Activated CD8-positive, alpha-beta T cell treated with anti-CD3 and anti-CD28 coated beads, Interleukin-2, amount 10 ng/mL, durations not matched to agents 7 days and 5 days (primary cell): ENCODE measurements at regions of chr5 and their contacts with region 1.

Region 1: GRCh38 chr5:170278611-170279452 is 18.7 kb downstream of the LCP2 start:
- DNase-seq: peak; percentile 97
- ATAC-seq: peak; percentile 77
- H3K4me3 Mint-ChIP-seq: peak overlapping the region; percentile 72
- H3K27ac Mint-ChIP-seq: peak overlapping the region; percentile 94
- H3K4me1 Mint-ChIP-seq: peaks cover 94% of the 10 kb centered on the region
- H3K27me3 Mint-ChIP-seq: no peaks in the 10 kb centered on the region

Region 2: GRCh38 chr5:170262061-170263045 is 16.5 kb before region 1 on chr5:
- CTCF ChIA-PET with region 1: interaction called, 107 read pairs
- POLR2A ChIA-PET with region 1: interaction called, 79 read pairs
- DNase-seq: peak; percentile 82
- ATAC-seq: peak; percentile 68
- H3K4me3 Mint-ChIP-seq: peak overlapping the region; percentile 70
- H3K27ac Mint-ChIP-seq: peak overlapping the region; percentile 95
- H3K4me1 Mint-ChIP-seq: peaks cover 99% of the 10 kb centered on the region
- H3K27me3 Mint-ChIP-seq: no peaks in the 10 kb centered on the region